Heart left ventricle (tissue), 16 donors: ENCODE measurements at regions of chr2 and their contacts with region 1.

Region 1: GRCh38 chr2:32553829-32554432 is 73.9 kb upstream of the TTC27 start:
- DNase-seq: no peak
- ATAC-seq: peak in 3 of 4 donors; percentile 63 to 73 (median 64)
- H3K4me3 ChIP-seq: no peak overlapping the region
- H3K27ac ChIP-seq: no peak overlapping the region
- H3K4me1 ChIP-seq: peaks cover 0 to 5% (median 0%) of the 10 kb centered on the region in 12 donors
- H3K27me3 ChIP-seq: no peaks in the 10 kb centered on the region
- CTCF ChIP-seq: peak; percentile 57 to 81 (median 72)
- POLR2A ChIP-seq: no peak

Region 2: DNA sequence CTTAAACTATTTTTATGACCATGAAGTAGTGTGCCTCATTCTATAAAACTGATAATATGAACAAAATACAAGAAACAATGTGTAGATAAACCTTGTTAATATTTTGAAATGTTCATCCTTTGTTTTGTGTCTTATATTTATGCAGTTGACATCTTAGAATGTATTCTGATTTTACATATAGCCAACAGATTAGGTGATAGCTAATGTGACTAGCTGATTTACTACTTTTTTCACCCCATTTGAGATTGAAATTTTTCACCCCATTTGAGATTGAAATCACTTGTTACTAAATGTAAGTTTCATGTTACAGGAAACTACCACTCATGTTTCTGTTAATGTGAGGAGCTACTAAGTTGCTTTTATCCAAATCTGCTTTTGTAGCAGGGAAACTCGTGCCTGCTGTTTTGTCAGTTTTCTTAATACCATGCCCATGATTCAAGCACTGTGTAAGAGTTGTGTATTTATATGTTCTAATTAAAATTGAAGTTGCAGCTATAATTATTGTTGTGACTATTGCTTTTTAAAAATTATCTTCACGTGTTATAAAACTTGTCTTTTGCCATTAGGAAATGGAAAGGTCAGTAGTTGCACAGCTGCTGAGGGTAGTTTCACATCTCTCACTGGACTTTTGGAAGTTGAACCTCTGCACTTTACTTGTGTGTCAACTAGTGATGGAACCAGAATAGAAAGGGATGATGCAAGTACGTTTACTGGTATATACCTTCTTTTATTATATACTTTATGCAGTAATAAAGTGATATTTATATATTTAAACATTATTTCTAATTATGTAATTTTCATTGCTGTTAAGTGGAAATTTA is 100.5 kb before region 1 on chr2:
- intact Hi-C with region 1: no loop called
- DNase-seq: no peak
- ATAC-seq: no peak
- H3K4me3 ChIP-seq: no peak overlapping the region
- H3K27ac ChIP-seq: no peak overlapping the region
- H3K4me1 ChIP-seq: no peaks in the 10 kb centered on the region
- H3K27me3 ChIP-seq: no peaks in the 10 kb centered on the region
- CTCF ChIP-seq: no peak
- POLR2A ChIP-seq: no peak

Region 3: GRCh38 chr2:32632089-32632488 is 78.2 kb after region 1 on chr2:
- intact Hi-C with region 1: no loop called
- DNase-seq: no peak
- ATAC-seq: no peak
- H3K4me3 ChIP-seq: no peak overlapping the region
- H3K27ac ChIP-seq: no peak overlapping the region
- H3K4me1 ChIP-seq: peaks cover 0 to 22% (median 13%) of the 10 kb centered on the region in 12 donors
- H3K27me3 ChIP-seq: no peaks in the 10 kb centered on the region
- CTCF ChIP-seq: no peak
- POLR2A ChIP-seq: no peak

Region 4: GRCh38 chr2:33395655-33396249 is 841.8 kb after region 1 on chr2:
- intact Hi-C with region 1: loop called in 1 of 10 experiments (anchors 10 kb)
- DNase-seq: peak in 2 of 5 donors; percentile 23 to 35
- ATAC-seq: peak in 1 of 4 donors; percentile 47
- H3K4me3 ChIP-seq: no peak overlapping the region
- H3K27ac ChIP-seq: no peak overlapping the region
- H3K4me1 ChIP-seq: peaks cover 0 to 9% (median 0%) of the 10 kb centered on the region in 12 donors
- H3K27me3 ChIP-seq: no peaks in the 10 kb centered on the region
- CTCF ChIP-seq: peak; percentile 36 to 60 (median 48)
- POLR2A ChIP-seq: no peak